ENCODE measurements at regions of chr2 and their contacts with region 1.

Region 1: GRCh38 chr2:84459018-84459943 is at the start of gene SUCLG1:
- DNase-seq: peak; percentile 88
- H3K4me3 ChIP-seq: peak within 1 kb of the TSS; percentile 77
- H3K4me3 Mint-ChIP-seq: peak within 1 kb of the TSS; percentile 97
- H3K27ac Mint-ChIP-seq: peak within 1 kb of the TSS; percentile 96
- H3K4me1 ChIP-seq: peaks cover 38% of the 10 kb centered on the region
- H3K4me1 Mint-ChIP-seq: peaks cover 35% of the 10 kb centered on the region
- H3K27me3 ChIP-seq: no peaks in the 10 kb centered on the region
- H3K27me3 Mint-ChIP-seq: no peaks in the 10 kb centered on the region
- CTCF ChIP-seq: no peak
- total RNA-seq, gene SUCLG1: 155 and 161 TPM in 2 replicates

Region 2: DNA sequence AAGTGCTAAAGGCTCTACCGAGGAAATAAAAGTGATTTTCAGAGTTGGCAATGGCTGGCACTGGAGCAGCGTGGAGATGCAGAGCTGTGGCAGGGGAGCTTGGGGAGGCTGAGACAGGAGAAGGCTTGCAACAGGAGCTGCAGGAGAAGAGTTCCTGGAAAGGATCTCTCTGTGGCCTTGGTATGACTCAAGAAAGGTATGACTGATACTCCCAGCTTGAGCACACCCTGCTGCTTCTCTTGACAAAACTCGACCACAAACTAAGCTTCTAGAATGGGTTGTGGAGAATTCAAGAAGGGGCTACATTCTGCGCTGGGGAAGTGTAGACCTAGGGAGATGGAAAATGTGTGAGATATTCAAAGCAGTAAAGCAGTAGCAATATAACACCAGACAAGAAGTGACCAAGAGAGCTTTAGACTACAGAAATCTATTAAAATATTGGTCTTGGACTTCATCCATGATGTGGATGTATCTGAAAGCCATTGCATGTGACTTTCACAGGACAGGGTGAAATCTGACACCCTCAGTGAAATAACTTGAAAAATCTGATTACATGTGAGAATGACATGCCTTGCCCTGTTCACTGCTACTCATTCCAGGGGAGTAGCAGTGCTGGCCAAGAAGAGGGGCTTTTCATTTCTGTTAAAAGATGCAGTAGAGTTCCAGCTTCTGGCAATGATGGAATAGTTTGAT is 41.7 kb before region 1 on chr2:
- CTCF ChIA-PET with region 1: no interaction called
- POLR2A ChIA-PET with region 1: no interaction called
- intact Hi-C with region 1: no loop called
- DNase-seq: no peak
- H3K4me3 ChIP-seq: no peak overlapping the region
- H3K4me3 Mint-ChIP-seq: no peak overlapping the region
- H3K27ac Mint-ChIP-seq: no peak overlapping the region
- H3K4me1 ChIP-seq: no peaks in the 10 kb centered on the region
- H3K4me1 Mint-ChIP-seq: no peaks in the 10 kb centered on the region
- H3K27me3 ChIP-seq: no peaks in the 10 kb centered on the region
- H3K27me3 Mint-ChIP-seq: no peaks in the 10 kb centered on the region
- CTCF ChIP-seq: no peak

Region 3: GRCh38 chr2:84474175-84474574 is 14.9 kb after region 1 on chr2:
- CTCF ChIA-PET with region 1: no interaction called
- POLR2A ChIA-PET with region 1: no interaction called
- intact Hi-C with region 1: loop called (anchors 2 kb)
- DNase-seq: peak in 1 of 2 experiments; percentile 37
- H3K4me3 ChIP-seq: no peak overlapping the region
- H3K4me3 Mint-ChIP-seq: no peak overlapping the region
- H3K27ac Mint-ChIP-seq: no peak overlapping the region
- H3K4me1 ChIP-seq: no peaks in the 10 kb centered on the region
- H3K4me1 Mint-ChIP-seq: no peaks in the 10 kb centered on the region
- H3K27me3 ChIP-seq: no peaks in the 10 kb centered on the region
- H3K27me3 Mint-ChIP-seq: no peaks in the 10 kb centered on the region
- CTCF ChIP-seq: no peak

Region 4: DNA sequence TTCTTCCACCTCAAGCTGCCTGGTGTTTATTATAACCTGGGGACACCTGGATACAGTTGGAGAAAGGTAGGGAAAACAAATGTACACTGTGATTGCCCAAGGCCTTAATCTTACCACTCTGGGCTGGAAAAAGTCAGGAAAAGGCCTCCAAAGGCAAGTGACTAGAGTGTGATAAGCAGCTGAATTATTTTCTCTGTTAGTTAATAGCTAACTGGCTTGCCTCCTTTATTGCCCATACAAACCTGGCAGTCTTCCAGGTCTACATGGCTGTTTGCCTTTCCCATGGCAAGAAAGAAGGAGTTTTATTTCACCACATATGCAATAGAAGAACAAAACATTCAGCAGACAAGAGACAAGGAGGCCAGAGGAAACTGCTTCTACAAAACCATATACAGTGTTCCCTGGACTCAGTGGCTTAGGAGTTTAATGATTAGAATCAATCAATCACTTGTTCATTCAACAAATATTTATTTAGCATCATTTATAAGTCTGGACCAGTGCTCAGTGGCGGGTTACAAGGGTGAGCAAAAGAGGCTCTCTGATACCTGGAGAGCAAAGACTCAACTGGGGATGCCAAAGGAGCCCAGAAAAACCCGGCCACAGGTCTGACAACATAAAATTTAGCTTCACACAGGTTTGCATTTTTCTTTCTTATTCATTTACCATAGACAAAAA is 27.3 kb after region 1 on chr2:
- CTCF ChIA-PET with region 1: no interaction called
- POLR2A ChIA-PET with region 1: interaction called, 5 read pairs
- intact Hi-C with region 1: loop called (anchors 1 kb)
- DNase-seq: peak; percentile 61 to 83
- H3K4me3 ChIP-seq: no peak overlapping the region
- H3K4me3 Mint-ChIP-seq: peak overlapping the region; percentile 43
- H3K27ac Mint-ChIP-seq: peak overlapping the region; percentile 86
- H3K4me1 ChIP-seq: peaks cover 27% of the 10 kb centered on the region
- H3K4me1 Mint-ChIP-seq: peaks cover 16% of the 10 kb centered on the region
- H3K27me3 ChIP-seq: no peaks in the 10 kb centered on the region
- H3K27me3 Mint-ChIP-seq: no peaks in the 10 kb centered on the region
- CTCF ChIP-seq: no peak

Region 5: GRCh38 chr2:84532291-84532690 is 73.0 kb after region 1 on chr2:
- CTCF ChIA-PET with region 1: no interaction called
- POLR2A ChIA-PET with region 1: no interaction called
- intact Hi-C with region 1: no loop called
- DNase-seq: no peak
- H3K4me3 ChIP-seq: no peak overlapping the region
- H3K4me3 Mint-ChIP-seq: no peak overlapping the region
- H3K27ac Mint-ChIP-seq: no peak overlapping the region
- H3K4me1 ChIP-seq: peaks cover 11% of the 10 kb centered on the region
- H3K4me1 Mint-ChIP-seq: no peaks in the 10 kb centered on the region
- H3K27me3 ChIP-seq: no peaks in the 10 kb centered on the region
- H3K27me3 Mint-ChIP-seq: no peaks in the 10 kb centered on the region
- CTCF ChIP-seq: no peak

Region 6: DNA sequence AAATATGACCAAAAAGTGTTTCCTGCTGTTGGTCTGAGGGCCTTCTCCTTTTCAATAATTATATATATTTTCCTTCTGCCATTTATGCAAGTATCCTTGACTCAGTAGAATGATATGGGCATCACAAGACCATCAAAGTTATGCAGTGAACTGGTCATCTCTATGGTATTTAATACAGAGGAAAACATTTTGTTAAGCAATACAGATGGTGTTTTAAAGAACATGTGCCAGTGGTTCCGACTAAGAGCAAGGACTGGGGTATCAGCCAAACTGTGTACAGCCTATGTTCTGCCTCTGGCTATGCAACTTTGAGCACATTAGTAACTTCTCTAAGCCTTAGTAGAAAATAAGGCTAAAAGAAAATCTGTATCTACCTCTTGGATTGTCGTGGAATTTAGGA is 242.6 kb after region 1 on chr2:
- CTCF ChIA-PET with region 1: no interaction called
- POLR2A ChIA-PET with region 1: no interaction called
- intact Hi-C with region 1: no loop called
- DNase-seq: no peak
- H3K4me3 ChIP-seq: no peak overlapping the region
- H3K4me3 Mint-ChIP-seq: no peak overlapping the region
- H3K27ac Mint-ChIP-seq: no peak overlapping the region
- H3K4me1 ChIP-seq: no peaks in the 10 kb centered on the region
- H3K4me1 Mint-ChIP-seq: no peaks in the 10 kb centered on the region
- H3K27me3 ChIP-seq: no peaks in the 10 kb centered on the region
- H3K27me3 Mint-ChIP-seq: peaks cover 9% of the 10 kb centered on the region
- CTCF ChIP-seq: no peak

Measured in Caco-2 (cell line).